GM12878 (cell line): ENCODE measurements at regions of chr15 and their contacts with region 1.

Region 1: GRCh38 chr15:55637086-55637485 is 48.9 kb upstream of the PYGO1 start:
- DNase-seq: no peak
- ATAC-seq: no peak
- H3K4me3 ChIP-seq: no peak overlapping the region
- H3K27ac ChIP-seq: no peak overlapping the region
- H3K4me1 ChIP-seq: no peaks in the 10 kb centered on the region
- H3K27me3 ChIP-seq: no peaks in the 10 kb centered on the region
- CTCF ChIP-seq: no peak
- EP300 ChIP-seq: no peak
- POLR2A ChIP-seq: no peak
- RAD21 ChIP-seq: no peak

Region 2: DNA sequence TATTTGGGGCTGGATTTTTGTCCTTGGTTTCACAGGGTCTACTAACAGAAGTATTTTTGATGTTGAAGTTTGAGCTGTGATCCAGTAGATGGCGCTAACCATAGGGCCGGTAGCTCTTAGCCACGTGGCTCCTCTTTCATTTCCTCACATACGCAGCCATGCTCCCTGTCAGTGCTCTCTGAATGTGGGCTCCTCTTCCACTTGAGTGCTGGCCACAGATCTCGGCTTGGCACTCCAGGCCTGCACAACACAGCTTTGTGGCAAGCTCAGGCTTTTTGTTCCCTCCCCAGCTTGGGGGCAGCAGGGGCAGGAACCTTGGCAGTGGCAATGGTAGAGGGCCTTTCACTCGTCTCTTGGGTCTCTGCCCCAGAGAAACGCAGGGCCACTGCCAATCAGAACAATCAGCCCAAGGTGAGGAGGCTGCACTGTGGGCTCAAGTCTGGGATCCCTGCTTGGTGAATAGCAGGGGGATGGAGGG is 110.5 kb before region 1 on chr15:
- CTCF ChIA-PET with region 1: interaction called, 27 read pairs
- POLR2A ChIA-PET with region 1: no interaction called
- RAD21 ChIA-PET with region 1: interaction called, 9 read pairs
- SMC1A ChIA-PET with region 1: interaction called, 5 read pairs
- in situ Hi-C with region 1: loop called (anchors 5 kb)
- intact Hi-C with region 1: loop called (anchors 1 kb)
- DNase-seq: no peak
- ATAC-seq: peak; percentile 90
- H3K4me3 ChIP-seq: no peak overlapping the region
- H3K27ac ChIP-seq: no peak overlapping the region
- H3K4me1 ChIP-seq: no peaks in the 10 kb centered on the region
- H3K27me3 ChIP-seq: no peaks in the 10 kb centered on the region
- CTCF ChIP-seq: peak; percentile 50 to 61 (median 55)
- EP300 ChIP-seq: no peak
- POLR2A ChIP-seq: no peak
- RAD21 ChIP-seq: peak; percentile 50

Region 3: GRCh38 chr15:55599439-55599838 is 37.6 kb before region 1 on chr15:
- CTCF ChIA-PET with region 1: no interaction called
- POLR2A ChIA-PET with region 1: no interaction called
- RAD21 ChIA-PET with region 1: no interaction called
- SMC1A ChIA-PET with region 1: no interaction called
- in situ Hi-C with region 1: no loop called
- intact Hi-C with region 1: no loop called
- DNase-seq: no peak
- ATAC-seq: no peak
- H3K4me3 ChIP-seq: no peak overlapping the region
- H3K27ac ChIP-seq: no peak overlapping the region
- H3K4me1 ChIP-seq: no peaks in the 10 kb centered on the region
- H3K27me3 ChIP-seq: no peaks in the 10 kb centered on the region
- CTCF ChIP-seq: no peak
- EP300 ChIP-seq: no peak
- POLR2A ChIP-seq: no peak
- RAD21 ChIP-seq: no peak